Activated CD4-positive, alpha-beta memory T cell treated with anti-CD3 and anti-CD28 coated beads, Interleukin-2, amount 10 ng/mL, durations not matched to agents 7 days and 5 days (primary cell): ENCODE measurements at regions of chrX and their contacts with region 1.

Region 1: DNA sequence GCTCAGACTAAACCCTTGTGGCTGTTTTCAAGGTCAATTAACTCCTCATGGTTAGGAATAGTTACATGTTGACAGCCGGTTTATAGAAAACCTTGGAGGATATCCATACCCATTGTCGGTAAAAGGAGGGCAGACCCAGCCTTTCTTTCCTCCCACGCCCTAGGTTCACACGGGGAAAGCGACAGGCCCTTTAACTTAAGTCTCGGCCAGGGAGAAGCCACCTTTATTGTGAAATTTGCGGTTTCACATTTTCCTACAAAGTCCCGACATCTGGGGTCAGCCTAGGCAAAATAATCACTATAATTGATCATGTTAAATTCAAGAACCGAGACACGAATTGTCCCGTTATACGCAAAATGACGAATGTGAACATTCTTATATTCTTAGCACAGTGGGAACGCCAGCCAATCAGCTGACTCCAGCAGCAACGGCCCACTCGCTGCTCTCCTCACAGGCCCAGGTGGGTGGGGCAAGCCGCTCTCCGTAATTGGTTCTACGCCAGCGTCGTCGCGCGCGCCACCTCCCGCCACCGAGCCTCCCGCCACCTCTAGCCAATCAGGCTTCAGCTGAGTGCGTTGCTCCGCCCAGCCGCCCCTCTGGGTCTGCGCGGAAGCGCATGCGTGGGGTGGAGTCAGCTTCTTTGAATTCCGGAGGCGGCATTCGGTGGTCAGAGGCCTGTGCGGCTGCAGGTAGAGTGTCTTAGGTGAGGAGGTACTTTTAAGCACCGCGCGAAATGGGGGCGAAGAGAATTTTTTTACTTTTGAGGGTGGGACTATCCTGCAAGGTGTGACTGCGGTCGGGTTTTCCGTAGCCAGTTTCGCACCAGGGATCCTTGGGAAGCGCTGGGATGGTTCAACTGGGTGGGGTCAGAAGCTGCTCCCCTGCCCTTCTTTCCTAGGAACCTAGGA is at the start of gene CENPI:
- DNase-seq: peak; percentile 93
- H3K4me3 Mint-ChIP-seq: peak within 1 kb of the TSS; percentile 93
- H3K27ac Mint-ChIP-seq: peak within 1 kb of the TSS; percentile 77
- H3K4me1 Mint-ChIP-seq: peaks cover 40% of the 10 kb centered on the region
- H3K27me3 Mint-ChIP-seq: no peaks in the 10 kb centered on the region
- total RNA-seq, gene CENPI: 25.0 to 25.9 TPM

Region 2: GRCh38 chrX:100829730-100830129 is 268.1 kb before region 1 on chrX:
- CTCF ChIA-PET with region 1: no interaction called
- POLR2A ChIA-PET with region 1: interaction called, 12 read pairs
- DNase-seq: peak; percentile 23
- H3K4me3 Mint-ChIP-seq: peak overlapping the region; percentile 65
- H3K27ac Mint-ChIP-seq: peak overlapping the region; percentile 97
- H3K4me1 Mint-ChIP-seq: peaks cover 28% of the 10 kb centered on the region
- H3K27me3 Mint-ChIP-seq: no peaks in the 10 kb centered on the region